Heart left ventricle (tissue), 16 donors: ENCODE measurements at regions of chr7 and their contacts with region 1.

Region 1: GRCh38 chr7:104156842-104157277 is 51.0 kb downstream of the ORC5 start:
- DNase-seq: no peak
- ATAC-seq: no peak
- H3K4me3 ChIP-seq: no peak overlapping the region
- H3K27ac ChIP-seq: no peak overlapping the region
- H3K4me1 ChIP-seq: peaks cover 0 to 4% (median 0%) of the 10 kb centered on the region in 12 donors
- H3K27me3 ChIP-seq: no peaks in the 10 kb centered on the region
- CTCF ChIP-seq: peak; percentile 18 to 64 (median 48)
- POLR2A ChIP-seq: no peak

Region 2: GRCh38 chr7:103447073-103447951 is 709.5 kb before region 1 on chr7:
- intact Hi-C with region 1: loop called in 1 of 10 experiments (anchors 5 kb)
- DNase-seq: no peak
- ATAC-seq: peak in 1 of 4 donors; percentile 55
- H3K4me3 ChIP-seq: no peak overlapping the region
- H3K27ac ChIP-seq: no peak overlapping the region
- H3K4me1 ChIP-seq: peaks cover 0 to 12% (median 5%) of the 10 kb centered on the region in 12 donors
- H3K27me3 ChIP-seq: peaks cover 10 to 54% (median 25%) of the 10 kb centered on the region in 9 donors
- CTCF ChIP-seq: peak; percentile 13 to 61 (median 38)
- POLR2A ChIP-seq: no peak

Region 3: GRCh38 chr7:103524042-103524907 is 632.6 kb before region 1 on chr7:
- intact Hi-C with region 1: loop called in 6 of 10 experiments (anchors 5 to 10 kb)
- DNase-seq: no peak
- ATAC-seq: peak in 2 of 4 donors; percentile 47 to 63
- H3K4me3 ChIP-seq: no peak overlapping the region
- H3K27ac ChIP-seq: no peak overlapping the region
- H3K4me1 ChIP-seq: no peaks in the 10 kb centered on the region
- H3K27me3 ChIP-seq: peaks cover 0 to 8% (median 0%) of the 10 kb centered on the region in 9 donors
- CTCF ChIP-seq: peak in 9 of 12 donors; percentile 12 to 53 (median 42)
- POLR2A ChIP-seq: no peak

Region 4: GRCh38 chr7:103532955-103533354 is 623.9 kb before region 1 on chr7:
- intact Hi-C with region 1: loop called in 6 of 10 experiments (anchors 5 to 10 kb)
- DNase-seq: no peak
- ATAC-seq: peak; percentile 88 to 92 (median 90)
- H3K4me3 ChIP-seq: no peak overlapping the region
- H3K27ac ChIP-seq: no peak overlapping the region
- H3K4me1 ChIP-seq: no peaks in the 10 kb centered on the region
- H3K27me3 ChIP-seq: no peaks in the 10 kb centered on the region
- CTCF ChIP-seq: no peak
- POLR2A ChIP-seq: no peak

Region 5: GRCh38 chr7:103573479-103574058 is 583.3 kb before region 1 on chr7:
- intact Hi-C with region 1: loop called (anchors 2 to 10 kb)
- DNase-seq: no peak
- ATAC-seq: no peak
- H3K4me3 ChIP-seq: no peak overlapping the region
- H3K27ac ChIP-seq: no peak overlapping the region
- H3K4me1 ChIP-seq: peaks cover 0 to 7% (median 0%) of the 10 kb centered on the region in 12 donors
- H3K27me3 ChIP-seq: peaks cover 0 to 5% (median 0%) of the 10 kb centered on the region in 9 donors
- CTCF ChIP-seq: peak; percentile 53 to 73 (median 62)
- POLR2A ChIP-seq: no peak